Activated CD4-positive, alpha-beta T cell treated with anti-CD3 and anti-CD28 coated beads, Interleukin-2, amount 10 ng/mL, durations not matched to agents 24 days and 14 days (primary cell): ENCODE measurements at regions of chr13 and their contacts with region 1.

Region 1: DNA sequence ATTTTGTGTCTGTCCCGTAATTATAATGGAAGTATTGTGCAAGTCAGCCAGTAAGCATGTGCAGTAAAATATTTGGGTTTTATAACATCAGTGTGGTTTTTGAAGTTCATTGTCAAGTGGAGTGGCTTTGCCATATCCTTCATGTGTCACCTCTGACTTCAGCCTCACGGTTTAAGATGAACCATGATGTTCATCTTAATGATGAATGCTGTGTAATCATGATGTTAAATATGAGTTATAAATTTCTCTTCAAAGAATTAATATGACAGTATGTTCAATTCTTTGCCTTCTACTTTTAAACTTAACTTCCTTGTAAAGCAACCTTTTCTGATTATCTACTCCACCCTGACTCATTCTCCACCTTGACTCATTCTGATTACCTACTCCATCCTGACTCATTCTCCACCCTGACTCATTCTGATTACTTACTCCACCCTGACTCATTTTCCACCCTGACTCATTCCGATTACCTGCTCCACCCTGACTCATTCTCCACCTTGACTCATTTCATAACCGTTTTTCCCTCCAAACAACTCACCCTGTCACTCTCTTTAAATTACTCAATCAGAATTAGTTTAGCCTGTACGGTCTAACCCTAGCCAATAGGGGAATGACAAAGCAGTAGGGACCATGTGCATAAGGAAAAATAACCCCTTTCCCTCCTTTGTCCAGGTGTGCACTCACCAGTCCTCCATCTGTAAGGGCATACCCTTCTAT is 50.3 kb upstream of the ANKRD10 start:
- DNase-seq: peak; percentile 82
- H3K4me3 Mint-ChIP-seq: peak overlapping the region; percentile 19
- H3K27ac Mint-ChIP-seq: peak overlapping the region; percentile 86
- H3K4me1 Mint-ChIP-seq: peaks cover 27% of the 10 kb centered on the region
- H3K27me3 Mint-ChIP-seq: no peaks in the 10 kb centered on the region

Region 2: GRCh38 chr13:110138010-110138699 is 827.0 kb before region 1 on chr13:
- intact Hi-C with region 1: loop called (anchors 5 kb)
- DNase-seq: peak; percentile 90
- H3K4me3 Mint-ChIP-seq: peak overlapping the region; percentile 84
- H3K27ac Mint-ChIP-seq: peak overlapping the region; percentile 82
- H3K4me1 Mint-ChIP-seq: peaks cover 13% of the 10 kb centered on the region
- H3K27me3 Mint-ChIP-seq: peaks cover 58% of the 10 kb centered on the region

Region 3: DNA sequence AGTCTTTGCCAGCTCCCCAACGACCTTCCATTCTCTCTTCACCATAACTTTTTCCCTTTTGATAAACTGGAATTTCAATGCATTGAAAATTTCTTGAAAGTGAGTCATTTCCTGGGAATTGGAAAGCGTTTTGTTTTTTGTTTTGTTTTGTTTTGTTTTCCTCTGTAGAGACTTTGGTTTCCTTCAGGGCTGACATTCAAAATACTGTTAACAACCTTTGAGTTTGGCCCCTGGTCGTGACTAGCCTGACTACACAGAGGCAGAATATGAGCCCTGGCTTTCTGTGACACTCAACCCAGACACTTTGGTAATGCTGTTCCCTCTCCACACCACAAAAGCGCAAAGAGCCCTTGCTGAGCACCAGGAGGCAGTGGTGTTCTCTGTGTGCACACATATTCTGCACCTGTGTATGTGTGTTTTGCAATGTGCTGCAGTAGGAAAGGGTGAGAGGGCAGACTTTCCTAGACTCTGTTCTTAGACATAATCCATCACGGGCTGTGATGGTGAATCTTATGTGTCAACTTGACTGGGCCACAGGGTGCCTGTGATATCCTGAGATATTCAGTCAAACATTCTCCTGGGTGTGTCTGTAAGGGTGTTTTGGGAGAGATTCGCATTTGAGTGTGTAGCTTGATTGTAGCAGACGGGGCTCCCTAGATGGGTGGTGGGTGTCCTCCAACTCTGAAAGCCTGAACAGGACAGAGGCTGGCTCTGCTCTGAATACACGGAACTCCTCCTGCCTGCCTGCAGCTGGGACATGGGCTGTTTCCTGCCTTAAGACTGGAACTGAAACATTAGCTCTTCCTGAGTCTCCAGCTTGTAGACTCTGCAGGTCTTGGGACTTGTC is 20.9 kb before region 1 on chr13:
- intact Hi-C with region 1: loop called (anchors 1 kb)
- DNase-seq: peak; percentile 81
- H3K4me3 Mint-ChIP-seq: no peak overlapping the region
- H3K27ac Mint-ChIP-seq: peak overlapping the region; percentile 20
- H3K4me1 Mint-ChIP-seq: peaks cover 33% of the 10 kb centered on the region
- H3K27me3 Mint-ChIP-seq: peaks cover 4% of the 10 kb centered on the region

Region 4: GRCh38 chr13:111013196-111013595 is 48.0 kb after region 1 on chr13:
- intact Hi-C with region 1: loop called (anchors 1 kb)
- DNase-seq: no peak
- H3K4me3 Mint-ChIP-seq: no peak overlapping the region
- H3K27ac Mint-ChIP-seq: peak overlapping the region; percentile 73
- H3K4me1 Mint-ChIP-seq: peaks cover 26% of the 10 kb centered on the region
- H3K27me3 Mint-ChIP-seq: peaks cover 13% of the 10 kb centered on the region

Region 5: DNA sequence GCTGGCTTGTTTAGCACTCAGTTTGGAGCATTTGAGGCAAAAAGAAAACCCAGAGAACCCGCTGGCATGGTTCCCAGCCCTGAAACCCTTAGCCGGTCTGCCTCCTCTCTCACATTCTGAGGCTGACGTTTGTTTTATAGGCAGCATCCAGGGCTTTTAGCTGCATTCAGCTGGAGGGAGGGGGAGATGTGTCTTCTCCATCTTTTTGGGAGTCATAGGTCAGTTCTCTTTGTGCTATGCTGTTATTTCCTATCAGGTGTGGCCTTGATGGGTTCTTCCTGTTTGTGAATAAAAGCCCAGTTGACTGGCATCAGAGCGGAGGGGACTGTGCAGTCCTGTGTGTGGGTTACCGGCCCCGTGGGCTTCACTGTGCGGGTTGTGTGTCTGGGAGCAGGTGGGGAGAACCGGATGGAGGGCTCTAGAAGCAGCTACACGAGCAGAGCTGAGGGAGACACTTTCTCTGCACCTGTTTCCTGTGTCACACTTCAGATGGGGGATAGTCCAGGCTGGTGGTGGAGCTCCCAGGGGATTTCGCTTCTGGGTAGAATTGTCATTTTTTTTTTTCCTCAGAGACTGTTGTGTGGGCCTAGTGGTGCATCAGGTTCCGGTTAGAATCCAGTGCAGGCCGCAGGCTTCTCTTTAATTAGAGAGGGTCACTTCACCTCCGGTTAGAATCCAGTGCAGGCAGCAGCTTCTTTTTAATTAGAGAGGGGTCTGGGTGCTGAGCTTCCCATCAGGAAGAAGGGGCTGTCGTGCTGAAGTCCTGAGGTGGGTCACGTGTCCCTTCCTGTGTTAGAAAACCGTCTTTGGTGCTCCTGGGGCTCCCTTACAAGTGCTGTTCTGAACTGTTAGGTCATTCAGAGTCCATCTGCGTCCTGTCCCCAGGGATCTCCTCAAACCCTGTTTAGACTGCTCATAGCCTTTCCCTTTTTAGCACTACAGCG is 219.5 kb after region 1 on chr13:
- intact Hi-C with region 1: loop called (anchors 5 kb)
- DNase-seq: peak; percentile 81
- H3K4me3 Mint-ChIP-seq: peak overlapping the region; percentile 82
- H3K27ac Mint-ChIP-seq: peak overlapping the region; percentile 94
- H3K4me1 Mint-ChIP-seq: peaks cover 87% of the 10 kb centered on the region
- H3K27me3 Mint-ChIP-seq: no peaks in the 10 kb centered on the region